Transverse colon (tissue), 4 donors: ENCODE measurements at regions of chr5 and their contacts with region 1.

Region 1: DNA sequence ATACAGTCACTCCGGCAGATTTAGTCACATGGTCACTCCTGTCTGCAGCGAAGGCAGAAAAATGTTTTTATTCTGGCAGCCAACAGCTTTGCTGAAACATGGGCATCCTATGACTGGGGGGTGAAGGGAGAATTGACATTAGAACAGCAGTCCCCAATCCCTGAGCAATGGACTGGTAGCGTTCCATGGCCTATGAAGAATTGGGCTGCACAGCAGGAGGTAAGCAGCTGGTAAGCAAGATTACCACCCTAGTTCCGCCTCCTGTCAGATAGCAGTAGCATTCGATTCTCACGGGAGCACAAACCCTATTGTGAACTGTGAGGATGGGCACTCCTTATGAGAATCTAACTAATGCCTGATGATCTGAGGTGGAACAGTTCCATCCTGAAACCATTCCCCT is 93.1 kb upstream of the FTMT start:
- DNase-seq: no peak
- H3K4me3 ChIP-seq: no peak overlapping the region
- H3K27ac ChIP-seq: no peak overlapping the region
- H3K4me1 ChIP-seq: no peaks in the 10 kb centered on the region
- H3K27me3 ChIP-seq: no peaks in the 10 kb centered on the region
- CTCF ChIP-seq: no peak
- EP300 ChIP-seq: no peak
- POLR2A ChIP-seq: no peak

Region 2: DNA sequence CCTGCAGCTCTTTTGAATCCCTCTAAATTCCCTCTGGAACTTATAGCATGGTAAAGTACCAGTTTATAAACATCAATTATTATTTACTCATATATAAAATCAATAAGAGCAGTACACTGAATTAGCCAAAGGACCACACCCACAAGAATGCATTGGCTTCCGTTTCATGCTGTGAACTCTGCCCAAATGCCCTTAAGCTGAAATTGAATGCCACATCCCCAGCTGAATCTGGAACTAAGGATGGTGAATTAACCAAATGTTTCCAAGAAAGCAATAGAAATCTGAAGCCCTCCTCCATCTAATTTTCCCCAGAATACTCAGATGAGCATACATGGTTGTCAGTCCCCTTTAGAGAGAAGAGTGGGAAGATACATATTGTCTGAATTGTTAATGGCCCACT is 343.3 kb before region 1 on chr5:
- in situ Hi-C with region 1: no loop called
- intact Hi-C with region 1: no loop called
- DNase-seq: no peak
- H3K4me3 ChIP-seq: no peak overlapping the region
- H3K27ac ChIP-seq: no peak overlapping the region
- H3K4me1 ChIP-seq: no peaks in the 10 kb centered on the region
- H3K27me3 ChIP-seq: no peaks in the 10 kb centered on the region
- CTCF ChIP-seq: no peak
- EP300 ChIP-seq: no peak
- POLR2A ChIP-seq: no peak

Region 3: GRCh38 chr5:121681229-121681855 is 77.3 kb before region 1 on chr5:
- in situ Hi-C with region 1: no loop called
- intact Hi-C with region 1: no loop called
- DNase-seq: no peak
- H3K4me3 ChIP-seq: no peak overlapping the region
- H3K27ac ChIP-seq: no peak overlapping the region
- H3K4me1 ChIP-seq: no peaks in the 10 kb centered on the region
- H3K27me3 ChIP-seq: no peaks in the 10 kb centered on the region
- CTCF ChIP-seq: no peak
- EP300 ChIP-seq: no peak
- POLR2A ChIP-seq: no peak

Region 4: DNA sequence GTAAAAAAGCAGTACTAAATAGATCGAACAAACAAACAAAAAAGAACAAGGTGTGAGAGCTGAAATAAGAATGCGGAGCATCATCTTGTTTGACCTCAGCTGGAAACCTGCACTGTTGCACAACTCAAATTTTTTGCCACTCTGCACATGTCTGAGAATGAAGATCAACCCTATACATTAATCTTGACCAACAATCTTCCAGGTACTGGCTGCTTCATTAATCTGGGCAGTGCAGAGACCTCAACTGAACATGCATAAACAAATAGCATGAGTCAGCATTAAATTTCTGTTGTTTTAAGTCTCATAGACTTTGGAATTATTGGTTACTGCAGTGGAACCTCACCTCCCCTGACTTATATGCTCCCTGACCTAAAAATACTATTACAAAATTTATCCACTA is 21.5 kb before region 1 on chr5:
- in situ Hi-C with region 1: no loop called
- intact Hi-C with region 1: loop called (anchors 1 kb)
- DNase-seq: no peak
- H3K4me3 ChIP-seq: no peak overlapping the region
- H3K27ac ChIP-seq: no peak overlapping the region
- H3K4me1 ChIP-seq: no peaks in the 10 kb centered on the region
- H3K27me3 ChIP-seq: no peaks in the 10 kb centered on the region
- CTCF ChIP-seq: no peak
- EP300 ChIP-seq: no peak
- POLR2A ChIP-seq: no peak